SK-N-SH (cell line): ENCODE measurements at regions of chr20 and their contacts with region 1.

Region 1: DNA sequence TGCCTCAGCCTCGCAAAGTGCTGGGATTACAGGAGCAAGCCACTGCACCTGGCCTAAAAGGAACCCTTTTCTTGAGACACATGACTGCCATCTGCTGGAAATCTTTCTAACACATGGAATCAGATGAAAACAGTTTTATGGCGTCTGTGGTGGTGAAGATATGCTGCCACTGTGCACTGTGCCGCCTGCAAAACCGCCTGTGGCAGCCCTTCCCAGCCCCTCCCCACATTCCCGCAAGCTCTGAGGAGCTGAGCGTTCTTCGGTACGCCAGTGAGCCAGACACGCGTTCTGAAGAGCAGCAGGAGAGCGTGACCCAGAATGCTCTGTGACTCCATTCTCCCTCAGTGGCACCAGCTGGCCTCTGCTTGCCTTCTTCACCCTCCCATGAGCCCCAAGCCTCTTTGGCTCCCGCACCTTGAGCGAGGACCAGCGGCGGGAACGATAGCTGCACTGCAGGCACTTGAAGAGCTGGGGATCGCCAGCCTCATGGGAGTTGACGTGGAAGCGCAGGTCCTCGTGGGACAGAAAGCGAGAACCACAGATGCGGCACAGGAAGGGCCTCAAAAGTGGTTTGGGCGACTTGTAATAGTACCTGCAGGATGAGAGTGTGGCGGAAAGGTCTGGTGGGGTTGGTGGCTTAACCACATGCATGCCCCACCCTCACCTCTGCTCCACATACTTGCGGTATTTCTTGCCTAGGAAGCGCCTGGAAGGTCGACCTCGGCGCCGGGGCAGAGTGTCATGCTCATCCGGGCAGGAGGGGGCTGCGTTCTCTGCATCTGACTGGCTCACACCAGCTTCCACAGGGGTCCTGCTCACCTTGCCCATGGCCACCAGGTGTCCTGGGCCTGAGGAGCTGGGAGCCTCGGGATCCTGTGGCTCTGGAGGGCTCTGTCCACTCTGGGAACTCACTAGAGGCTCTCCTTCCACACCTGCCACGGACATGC is 8.7 kb downstream of the ZNF335 start:
- DNase-seq: peak; percentile 56
- H3K4me3 ChIP-seq: no peak overlapping the region
- H3K27ac ChIP-seq: no peak overlapping the region
- H3K4me1 ChIP-seq: no peaks in the 10 kb centered on the region
- H3K27me3 ChIP-seq: no peaks in the 10 kb centered on the region
- CTCF ChIP-seq: peak; percentile 54
- EP300 ChIP-seq: no peak
- RAD21 ChIP-seq: peak; percentile 58

Region 2: GRCh38 chr20:45798935-45799642 is 164.2 kb before region 1 on chr20:
- CTCF ChIA-PET with region 1: interaction called, 11 read pairs
- POLR2A ChIA-PET with region 1: no interaction called
- DNase-seq: peak; percentile 71
- H3K4me3 ChIP-seq: no peak overlapping the region
- H3K27ac ChIP-seq: peak overlapping the region in 1 of 2 experiments; percentile 1; a peak in 1 of 4 replicates
- H3K4me1 ChIP-seq: no peaks in the 10 kb centered on the region
- H3K27me3 ChIP-seq: no peaks in the 10 kb centered on the region
- CTCF ChIP-seq: peak; percentile 76
- EP300 ChIP-seq: no peak
- RAD21 ChIP-seq: peak; percentile 76

Region 3: DNA sequence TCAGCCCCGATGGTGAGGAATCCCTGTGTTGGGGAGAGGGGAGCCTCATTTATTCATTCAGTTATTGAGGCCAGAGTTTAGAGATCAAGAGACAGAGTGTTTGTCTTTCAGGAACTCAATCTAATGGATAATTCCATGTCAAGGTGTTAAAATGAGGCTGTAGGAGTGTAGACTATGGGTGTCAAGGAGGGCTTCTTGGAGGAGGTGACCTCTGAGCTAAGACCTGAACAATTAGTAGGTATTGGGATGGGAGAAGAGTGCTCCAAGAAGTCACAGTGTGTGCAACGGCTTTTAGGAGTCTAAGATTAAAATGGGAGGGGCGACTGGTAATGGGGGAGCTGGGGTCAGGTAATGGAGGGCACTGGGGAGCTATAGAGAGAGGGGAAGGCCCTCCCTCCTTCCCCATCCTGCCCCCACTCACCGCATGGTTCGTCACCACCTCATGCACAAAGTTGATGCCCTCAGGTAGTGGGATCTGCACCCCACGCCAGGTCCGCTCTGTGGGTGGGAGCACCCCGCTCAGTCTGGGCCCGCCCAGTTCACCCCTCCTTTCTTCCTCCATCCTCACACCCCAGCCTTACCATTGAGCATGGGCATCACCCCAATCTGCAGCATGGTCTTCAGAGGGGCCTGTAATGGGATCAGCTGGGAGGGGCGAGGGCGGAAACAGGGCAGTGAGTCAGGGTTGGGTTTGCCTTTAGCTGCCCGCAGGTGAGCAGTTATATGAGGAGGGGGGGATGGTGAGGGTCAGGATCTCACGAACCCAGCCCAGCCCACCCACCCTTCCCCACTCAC is 64.1 kb before region 1 on chr20:
- CTCF ChIA-PET with region 1: no interaction called
- POLR2A ChIA-PET with region 1: no interaction called
- DNase-seq: no peak
- H3K4me3 ChIP-seq: no peak overlapping the region
- H3K27ac ChIP-seq: no peak overlapping the region
- H3K4me1 ChIP-seq: no peaks in the 10 kb centered on the region
- H3K27me3 ChIP-seq: no peaks in the 10 kb centered on the region
- CTCF ChIP-seq: no peak
- EP300 ChIP-seq: no peak
- RAD21 ChIP-seq: no peak

Region 4: DNA sequence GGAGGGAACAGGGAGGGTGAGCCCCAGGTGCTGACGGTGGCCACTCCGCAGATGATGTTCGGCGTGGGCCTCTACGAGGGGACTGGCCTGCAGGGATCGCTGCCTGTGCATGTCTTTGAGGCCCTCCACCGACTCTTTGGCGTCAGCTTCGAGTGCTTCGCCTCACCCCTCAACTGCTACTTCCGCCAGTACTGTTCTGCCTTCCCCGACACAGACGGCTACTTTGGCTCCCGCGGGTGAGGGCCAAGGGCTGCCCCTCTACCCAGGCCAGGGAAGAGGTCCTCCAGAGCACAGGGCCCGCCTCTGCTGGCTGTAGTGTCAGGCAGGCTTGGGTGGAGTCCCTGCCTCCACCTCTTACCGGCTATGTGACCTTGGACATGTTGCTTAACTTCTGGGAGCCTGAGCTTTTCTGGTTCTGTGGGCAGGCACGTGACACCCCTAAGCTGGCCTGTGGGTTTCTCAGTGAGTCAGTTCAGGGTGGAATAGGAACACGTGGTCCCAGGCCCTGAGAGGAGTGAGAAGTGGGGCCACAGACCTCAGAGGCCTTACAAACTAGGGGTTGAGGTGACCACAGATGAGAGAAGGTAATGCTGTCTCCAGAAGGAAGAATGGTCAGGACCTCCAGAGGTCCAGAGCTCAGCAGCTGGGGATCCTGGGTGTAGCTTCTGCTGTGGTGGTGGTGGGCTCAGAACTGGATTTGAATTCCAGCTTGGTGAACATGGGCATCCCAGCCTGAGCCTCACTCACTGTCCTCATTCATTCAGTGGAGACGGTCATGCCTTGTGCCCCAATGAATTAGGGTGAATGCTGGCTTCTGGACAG is 17.0 kb before region 1 on chr20:
- CTCF ChIA-PET with region 1: interaction called, 27 read pairs
- POLR2A ChIA-PET with region 1: interaction called, 5 read pairs
- DNase-seq: no peak
- H3K4me3 ChIP-seq: no peak overlapping the region
- H3K27ac ChIP-seq: no peak overlapping the region
- H3K4me1 ChIP-seq: peaks cover 0 to 5% of the 10 kb centered on the region in 2 experiments; a peak in 1 of 4 replicates
- H3K27me3 ChIP-seq: no peaks in the 10 kb centered on the region
- CTCF ChIP-seq: no peak
- EP300 ChIP-seq: no peak
- RAD21 ChIP-seq: no peak